Motor neuron (in vitro differentiated cells): ENCODE measurements at regions of chr6 and their contacts with region 1.

Region 1: GRCh38 chr6:164911873-164912580 is 397.4 kb downstream of the C6orf118 start:
- ATAC-seq: peak in 7 of 8 experiments; percentile 52 to 81 (median 63)
- H3K4me3 ChIP-seq: no peak overlapping the region
- H3K27ac ChIP-seq: no peak overlapping the region
- H3K4me1 ChIP-seq: peaks cover 9 to 24% of the 10 kb centered on the region in 2 donors

Region 2: DNA sequence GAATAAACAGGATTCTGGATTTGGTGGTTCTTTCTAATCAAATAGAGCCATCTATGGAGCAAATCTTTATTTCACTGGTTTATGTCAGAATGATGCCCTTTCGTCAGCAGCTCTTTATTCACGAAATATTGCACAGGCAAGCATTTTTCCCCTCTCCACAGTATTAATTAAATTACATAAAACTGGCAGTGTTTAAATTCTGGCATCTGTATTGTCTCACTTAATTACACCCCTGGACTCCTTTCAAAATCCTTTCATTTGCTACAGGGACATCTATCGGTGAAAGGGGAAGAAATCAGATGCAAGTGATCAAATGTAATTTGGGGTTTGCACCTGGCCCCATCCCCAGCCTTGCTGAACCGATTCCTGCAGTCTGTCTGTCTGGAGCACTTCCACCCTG is 695.7 kb before region 1 on chr6:
- in situ Hi-C with region 1: loop called in 1 of 9 experiments (anchors 25 kb)
- ATAC-seq: no peak
- H3K4me3 ChIP-seq: no peak overlapping the region
- H3K27ac ChIP-seq: no peak overlapping the region
- H3K4me1 ChIP-seq: peaks cover 14 to 21% of the 10 kb centered on the region in 2 donors